Dorsolateral prefrontal cortex (tissue), 120 donors: ENCODE measurements at regions of chr9 and their contacts with region 1.

Region 1: DNA sequence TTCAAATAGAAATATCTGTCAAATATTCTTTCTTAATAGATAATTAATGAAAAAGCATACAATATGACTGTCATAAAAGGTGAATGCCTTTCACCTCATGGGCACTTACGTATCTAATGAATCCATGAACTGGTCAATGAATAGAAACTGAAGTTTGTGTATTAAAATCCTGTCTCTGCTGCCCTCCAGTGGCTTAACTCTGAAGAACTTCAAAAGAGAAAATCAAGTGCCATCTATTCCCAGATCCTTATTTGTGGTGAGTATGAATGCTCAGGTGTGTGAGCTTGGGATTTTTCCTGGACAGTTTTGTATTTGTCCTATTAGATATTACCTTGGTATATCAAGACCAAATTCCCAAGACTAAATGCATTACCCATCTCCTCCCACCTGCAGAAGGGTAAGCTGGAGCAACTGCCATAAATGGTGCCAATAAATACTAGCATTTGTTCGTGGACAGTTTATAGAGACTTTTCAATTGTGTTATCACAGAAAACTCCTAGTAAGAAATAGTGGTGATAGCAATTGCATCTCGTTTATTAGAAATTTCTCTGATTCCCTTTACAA is 44.0 kb upstream of the SVEP1 start:
- DNase-seq: peak in 2 of 10 donors; percentile 25 to 57
- H3K4me3 ChIP-seq: peak overlapping the region in 1 of 59 donors; percentile 20
- H3K27ac ChIP-seq: no peak overlapping the region
- H3K27me3 ChIP-seq: no peaks in the 10 kb centered on the region
- CTCF ChIP-seq: peak; percentile 66 to 95 (median 84)

Region 2: DNA sequence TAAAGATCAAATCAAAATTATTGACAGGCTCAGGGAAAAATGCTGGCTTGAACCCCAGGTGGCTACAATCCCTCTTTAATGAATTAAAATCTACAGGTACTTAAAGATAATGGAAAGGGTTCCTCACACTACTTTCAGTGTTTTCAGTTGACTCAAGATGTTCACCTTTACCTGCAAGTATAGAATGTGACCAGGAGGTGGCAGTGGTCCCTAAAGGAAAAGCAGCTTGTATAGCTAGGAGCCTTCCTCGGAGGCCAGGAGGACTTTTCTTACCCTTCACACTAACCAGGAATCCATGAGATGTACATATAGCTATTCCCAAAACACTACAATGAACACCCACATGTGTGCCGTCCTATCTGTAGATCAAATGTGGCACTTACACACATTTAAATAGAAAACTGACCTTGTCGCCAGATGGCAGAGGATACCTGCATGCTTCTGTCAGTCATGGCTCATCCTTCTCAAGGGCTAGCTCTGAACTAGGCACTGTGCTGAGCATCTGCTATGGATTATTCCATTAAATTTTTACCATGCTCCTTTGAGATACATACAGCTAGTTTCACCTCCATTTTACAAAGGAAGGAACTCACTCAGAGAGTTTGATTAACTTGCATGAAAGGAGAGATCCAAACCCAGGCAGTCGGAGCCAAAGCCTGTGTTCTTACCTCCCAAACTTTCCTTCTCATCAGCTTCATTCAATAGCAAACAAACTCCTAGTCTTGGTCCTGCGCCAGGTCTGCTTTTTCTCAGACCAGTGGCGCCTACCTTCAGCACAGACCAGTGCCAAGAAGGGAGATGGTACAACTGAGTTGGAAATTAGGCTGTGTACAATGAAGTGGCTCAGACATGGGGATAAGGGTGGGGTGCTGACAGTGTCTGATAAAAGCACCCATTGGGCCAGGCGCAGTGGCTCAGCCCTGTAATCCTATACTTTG is 440.1 kb before region 1 on chr9:
- intact Hi-C with region 1: loop called (anchors 5 to 10 kb)
- DNase-seq: peak in 6 of 10 donors; percentile 9 to 77 (median 44)
- H3K4me3 ChIP-seq: no peak overlapping the region
- H3K27ac ChIP-seq: no peak overlapping the region
- H3K27me3 ChIP-seq: no peaks in the 10 kb centered on the region
- CTCF ChIP-seq: peak; percentile 43 to 88 (median 76)

Region 3: GRCh38 chr9:110188991-110189390 is 434.6 kb before region 1 on chr9:
- intact Hi-C with region 1: loop called (anchors 5 to 10 kb)
- DNase-seq: peak in 3 of 10 donors; percentile 45 to 55 (median 47)
- H3K4me3 ChIP-seq: no peak overlapping the region
- H3K27ac ChIP-seq: peak overlapping the region in 33 of 59 donors; percentile 4 to 82 (median 49)
- H3K27me3 ChIP-seq: no peaks in the 10 kb centered on the region
- CTCF ChIP-seq: no peak

Region 4: GRCh38 chr9:110427497-110428104 is 195.9 kb before region 1 on chr9:
- intact Hi-C with region 1: loop called in 1 of 2 experiments (anchors 5 kb)
- DNase-seq: peak in 7 of 10 donors; percentile 36 to 60 (median 56)
- H3K4me3 ChIP-seq: no peak overlapping the region
- H3K27ac ChIP-seq: peak overlapping the region in 18 of 59 donors; percentile 0 to 70 (median 21)
- H3K27me3 ChIP-seq: no peaks in the 10 kb centered on the region
- CTCF ChIP-seq: peak in 54 of 56 donors; percentile 27 to 75 (median 54)

Region 5: DNA sequence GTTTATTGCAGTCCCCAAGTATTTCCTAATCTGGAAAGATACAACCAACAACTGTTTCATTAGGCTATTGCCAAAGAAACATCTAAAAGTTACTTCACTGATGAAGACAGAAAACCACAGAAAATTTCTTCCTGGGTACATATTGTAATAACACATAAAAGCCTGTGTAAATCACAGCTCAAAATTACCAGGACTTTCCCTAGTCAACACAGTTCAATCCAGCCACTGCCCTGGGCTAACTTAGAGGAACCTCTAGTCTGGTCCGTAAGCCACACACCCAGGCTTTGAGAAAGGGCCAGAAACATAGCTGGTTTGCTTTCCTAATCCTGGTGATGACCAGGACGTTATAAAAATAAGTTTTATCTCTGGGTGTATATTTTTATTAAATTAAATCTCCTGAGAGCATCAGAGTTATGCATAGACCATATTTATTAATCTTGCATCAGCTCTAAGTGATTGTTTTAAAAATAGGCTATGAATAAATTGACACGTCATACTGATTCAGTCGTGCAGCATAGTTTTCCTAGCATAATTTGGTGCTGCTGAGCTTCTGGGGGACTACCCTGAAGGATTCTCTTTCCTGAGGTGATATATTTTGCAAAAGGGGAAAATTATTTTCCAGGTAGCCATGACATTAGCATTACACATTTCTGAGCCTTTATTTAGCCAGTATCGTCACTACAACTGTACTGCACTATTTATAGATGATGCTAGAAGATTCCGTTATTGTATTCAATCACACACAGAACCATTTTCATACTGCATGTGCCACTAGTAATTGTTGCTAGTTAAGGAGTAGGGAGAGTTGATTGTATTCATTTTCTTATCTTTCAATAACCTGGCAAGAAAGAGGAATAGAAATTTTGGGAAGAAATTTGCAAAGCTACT is 32.5 kb after region 1 on chr9:
- intact Hi-C with region 1: no loop called
- DNase-seq: no peak
- H3K4me3 ChIP-seq: peak overlapping the region in 16 of 59 donors; percentile 5 to 40 (median 16)
- H3K27ac ChIP-seq: peak overlapping the region in 14 of 59 donors; percentile 3 to 53 (median 35)
- H3K27me3 ChIP-seq: no peaks in the 10 kb centered on the region
- CTCF ChIP-seq: no peak